Activated CD4-positive, alpha-beta T cell treated with anti-CD3 and anti-CD28 coated beads for 36 hours (primary cell): ENCODE measurements at regions of chr6 and their contacts with region 1.

Region 1: GRCh38 chr6:131909408-131910218 is 41.6 kb downstream of the CCN2 start:
- DNase-seq: peak; percentile 85
- ATAC-seq: peak; percentile 92
- H3K4me3 Mint-ChIP-seq: no peak overlapping the region
- H3K27ac Mint-ChIP-seq: no peak overlapping the region
- H3K4me1 Mint-ChIP-seq: peaks cover 9% of the 10 kb centered on the region
- H3K27me3 Mint-ChIP-seq: peaks cover 23% of the 10 kb centered on the region

Region 2: DNA sequence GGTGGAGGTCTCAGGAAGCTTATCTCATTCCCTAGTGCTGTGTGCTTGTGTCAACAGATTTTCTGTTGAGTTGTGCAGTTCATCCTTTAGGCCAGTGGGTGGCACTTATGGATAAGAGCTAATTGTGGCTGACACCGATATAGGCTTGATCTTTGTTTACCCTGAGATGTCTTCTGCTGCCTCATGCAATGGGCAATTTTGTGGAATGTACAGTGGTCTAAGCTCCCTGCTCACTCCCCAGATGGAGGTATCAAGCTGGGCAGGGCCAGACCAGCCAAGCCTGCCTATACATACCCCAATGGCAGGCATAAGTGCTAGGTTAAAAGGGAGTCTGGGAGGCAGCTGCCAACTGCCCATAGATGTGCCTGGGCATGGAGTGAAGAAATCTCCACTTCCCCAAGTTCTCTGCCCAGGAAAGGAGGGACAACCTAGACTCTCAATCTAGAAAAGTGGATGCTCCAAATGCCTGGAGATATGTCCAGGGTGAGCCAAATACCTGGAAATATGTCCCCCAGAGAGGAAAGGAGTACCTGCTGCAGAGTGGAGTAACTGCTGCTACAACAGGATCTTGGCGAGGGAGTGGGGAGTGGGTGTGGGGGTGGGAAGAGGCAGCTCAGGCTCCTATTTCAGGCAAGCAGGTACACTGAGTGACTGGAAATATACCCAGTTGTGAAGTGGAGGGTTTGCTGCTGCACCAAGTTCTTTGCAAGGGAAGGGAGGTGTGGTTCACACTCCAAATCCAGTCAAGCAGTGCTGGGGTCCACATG is 389.8 kb before region 1 on chr6:
- CTCF ChIA-PET with region 1: no interaction called
- POLR2A ChIA-PET with region 1: no interaction called
- intact Hi-C with region 1: loop called in 1 of 2 experiments (anchors 2 kb)
- DNase-seq: peak; percentile 65
- ATAC-seq: peak; percentile 94
- H3K4me3 Mint-ChIP-seq: no peak overlapping the region
- H3K27ac Mint-ChIP-seq: no peak overlapping the region
- H3K4me1 Mint-ChIP-seq: peaks cover 9% of the 10 kb centered on the region
- H3K27me3 Mint-ChIP-seq: no peaks in the 10 kb centered on the region

Region 3: GRCh38 chr6:131694831-131695426 is 214.7 kb before region 1 on chr6:
- CTCF ChIA-PET with region 1: interaction called, 23 read pairs
- POLR2A ChIA-PET with region 1: no interaction called
- intact Hi-C with region 1: loop called in 1 of 2 experiments (anchors 1 kb)
- DNase-seq: peak; percentile 48
- ATAC-seq: peak; percentile 76
- H3K4me3 Mint-ChIP-seq: no peak overlapping the region
- H3K27ac Mint-ChIP-seq: no peak overlapping the region
- H3K4me1 Mint-ChIP-seq: no peaks in the 10 kb centered on the region
- H3K27me3 Mint-ChIP-seq: no peaks in the 10 kb centered on the region

Region 4: GRCh38 chr6:131782764-131783163 is 126.8 kb before region 1 on chr6:
- CTCF ChIA-PET with region 1: interaction called, 3 read pairs
- POLR2A ChIA-PET with region 1: no interaction called
- intact Hi-C with region 1: loop called in 1 of 2 experiments (anchors 2 kb)
- DNase-seq: no peak
- ATAC-seq: no peak
- H3K4me3 Mint-ChIP-seq: no peak overlapping the region
- H3K27ac Mint-ChIP-seq: no peak overlapping the region
- H3K4me1 Mint-ChIP-seq: no peaks in the 10 kb centered on the region
- H3K27me3 Mint-ChIP-seq: peaks cover 13% of the 10 kb centered on the region